ENCODE measurements at regions of chr11 and their contacts with region 1.

Region 1: GRCh38 chr11:91248199-91248807 is 976.3 kb upstream of the FAT3 start:
- DNase-seq: peak; percentile 53
- ATAC-seq: no peak; the same call in 1 of the 2 replicates
- H3K4me3 ChIP-seq: no peak overlapping the region
- H3K27ac ChIP-seq: no peak overlapping the region
- H3K4me1 ChIP-seq: no peaks in the 10 kb centered on the region
- H3K27me3 ChIP-seq: no peaks in the 10 kb centered on the region
- CTCF ChIP-seq: peak; percentile 65
- POLR2A ChIP-seq: no peak
- RAD21 ChIP-seq: peak; percentile 62

Region 2: GRCh38 chr11:90204832-90205646 is 1043.3 kb before region 1 on chr11:
- CTCF ChIA-PET with region 1: no interaction called
- POLR2A ChIA-PET with region 1: no interaction called
- dilution Hi-C with region 1: no loop called
- in situ Hi-C with region 1: no loop called
- intact Hi-C with region 1: no loop called
- DNase-seq: peak; percentile 66
- ATAC-seq: peak; percentile 80
- H3K4me3 ChIP-seq: no peak overlapping the region
- H3K27ac ChIP-seq: no peak overlapping the region
- H3K4me1 ChIP-seq: no peaks in the 10 kb centered on the region
- H3K27me3 ChIP-seq: no peaks in the 10 kb centered on the region
- CTCF ChIP-seq: peak; percentile 75
- POLR2A ChIP-seq: no peak
- RAD21 ChIP-seq: peak; percentile 61

Region 3: DNA sequence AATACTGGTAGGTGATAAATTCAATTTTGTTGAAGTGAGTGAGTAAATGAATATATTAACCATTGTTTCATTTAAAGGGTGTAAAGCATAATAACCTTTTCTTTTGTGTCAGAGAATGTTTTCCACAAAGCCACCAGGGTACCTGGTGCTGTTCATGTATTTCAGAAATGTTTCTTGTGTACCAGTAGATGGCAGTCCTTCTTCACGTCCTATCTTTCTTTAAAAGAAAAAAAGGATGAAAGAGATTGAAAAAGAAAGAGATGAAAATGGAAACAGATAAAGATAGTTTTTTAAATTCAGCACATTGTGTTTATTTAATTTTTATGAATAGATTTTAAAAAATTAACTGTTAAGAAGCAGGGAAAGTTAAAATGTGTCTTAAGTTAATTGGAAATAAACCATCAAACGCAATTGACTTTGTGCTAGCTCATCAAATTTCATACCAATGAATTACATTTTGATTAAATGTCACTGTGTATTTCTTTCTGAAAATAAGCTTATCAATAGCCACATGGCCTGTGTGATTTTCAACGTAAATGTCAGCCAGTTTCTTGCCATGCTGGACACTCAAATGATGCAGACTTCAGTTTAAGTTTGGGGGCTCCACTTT is 960.0 kb before region 1 on chr11:
- CTCF ChIA-PET with region 1: no interaction called
- POLR2A ChIA-PET with region 1: no interaction called
- dilution Hi-C with region 1: no loop called
- in situ Hi-C with region 1: no loop called
- intact Hi-C with region 1: loop called (anchors 5 kb)
- DNase-seq: peak; percentile 3
- ATAC-seq: no peak; the same call in 1 of the 2 replicates
- H3K4me3 ChIP-seq: no peak overlapping the region
- H3K27ac ChIP-seq: no peak overlapping the region
- H3K4me1 ChIP-seq: no peaks in the 10 kb centered on the region
- H3K27me3 ChIP-seq: no peaks in the 10 kb centered on the region
- CTCF ChIP-seq: peak; percentile 50
- POLR2A ChIP-seq: no peak
- RAD21 ChIP-seq: peak; percentile 43; the same call in 1 of the 2 replicates

Region 4: DNA sequence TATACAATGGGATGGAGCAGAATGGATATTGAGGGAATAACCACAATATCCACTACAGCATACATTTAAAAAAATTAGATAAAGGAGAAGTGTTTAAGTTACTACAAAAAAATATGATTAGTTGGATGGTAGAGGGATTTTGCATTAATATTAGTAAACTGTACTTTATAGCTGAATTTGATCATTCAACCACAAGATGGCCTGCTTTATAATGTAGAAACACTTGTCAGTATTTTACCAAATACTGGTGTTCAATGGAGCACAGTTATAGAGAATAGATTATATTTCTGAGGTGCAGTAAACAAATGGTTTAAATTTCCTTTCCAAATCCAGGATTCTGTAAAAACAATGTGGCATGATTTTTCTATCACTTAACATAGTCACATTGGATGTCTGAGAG is 206.7 kb before region 1 on chr11:
- CTCF ChIA-PET with region 1: no interaction called
- POLR2A ChIA-PET with region 1: no interaction called
- dilution Hi-C with region 1: no loop called
- in situ Hi-C with region 1: no loop called
- intact Hi-C with region 1: loop called (anchors 2 kb)
- DNase-seq: no peak
- ATAC-seq: no peak
- H3K4me3 ChIP-seq: no peak overlapping the region
- H3K27ac ChIP-seq: no peak overlapping the region
- H3K4me1 ChIP-seq: no peaks in the 10 kb centered on the region
- H3K27me3 ChIP-seq: no peaks in the 10 kb centered on the region
- CTCF ChIP-seq: 0 out of 2 replicates have a peak, but pooled peaks have one; percentile 13
- POLR2A ChIP-seq: no peak
- RAD21 ChIP-seq: peak; percentile 22; the same call in 1 of the 2 replicates

Measured in IMR-90 (cell line).